ENCODE measurements at regions of chrX and their contacts with region 1.

Region 1: GRCh38 chrX:79270401-79270800 is 96.7 kb downstream of the ITM2A start:
- DNase-seq: peak; percentile 68 to 77 (median 71)
- H3K4me3 ChIP-seq: no peak overlapping the region
- H3K4me3 Mint-ChIP-seq: peak overlapping the region; percentile 3 to 73 (median 22)
- H3K27ac ChIP-seq: peak overlapping the region; percentile 15
- H3K27ac Mint-ChIP-seq: peak overlapping the region; percentile 42 to 91 (median 64)
- H3K4me1 ChIP-seq: peaks cover 61% of the 10 kb centered on the region
- H3K4me1 Mint-ChIP-seq: peaks cover 27 to 49% (median 34%) of the 10 kb centered on the region in 4 donors
- H3K27me3 ChIP-seq: no peaks in the 10 kb centered on the region
- H3K27me3 Mint-ChIP-seq: no peaks in the 10 kb centered on the region

Region 2: DNA sequence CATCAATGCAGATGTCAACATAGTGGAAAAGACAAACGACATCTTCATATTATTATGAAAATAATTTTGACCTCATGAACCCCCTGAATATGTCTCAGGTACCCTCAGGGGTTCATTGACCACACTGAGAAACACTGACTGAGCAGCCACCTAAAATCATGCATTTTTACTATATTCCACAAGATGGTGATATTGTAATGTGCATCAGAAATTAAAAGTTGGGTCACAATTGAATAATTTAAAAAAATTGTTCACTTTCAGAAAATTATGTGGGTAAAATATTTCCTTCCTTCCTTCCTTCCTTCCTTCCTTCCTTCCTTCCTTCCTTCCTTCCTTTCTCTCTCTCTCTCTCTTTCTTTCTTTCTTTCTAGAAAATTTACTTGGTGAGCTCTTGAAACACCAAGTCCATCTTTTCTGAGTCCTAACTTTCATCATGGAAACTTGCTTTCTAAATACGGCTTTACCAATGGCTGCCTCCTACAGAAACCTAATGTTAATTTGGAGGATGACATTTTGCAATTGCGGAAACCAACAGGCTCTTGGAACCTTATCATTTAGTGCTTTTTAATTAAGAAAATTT is 714.9 kb before region 1 on chrX:
- CTCF ChIA-PET with region 1: no interaction called
- POLR2A ChIA-PET with region 1: no interaction called
- intact Hi-C with region 1: loop called (anchors 1 kb)
- DNase-seq: peak in 4 of 5 donors; percentile 31 to 39 (median 33)
- H3K4me3 ChIP-seq: no peak overlapping the region
- H3K4me3 Mint-ChIP-seq: peak overlapping the region in 2 of 8 donors; percentile 24 to 34
- H3K27ac ChIP-seq: no peak overlapping the region
- H3K27ac Mint-ChIP-seq: peak overlapping the region in 5 of 7 donors; percentile 36 to 90 (median 75)
- H3K4me1 ChIP-seq: peaks cover 6% of the 10 kb centered on the region
- H3K4me1 Mint-ChIP-seq: peaks cover 0 to 1% (median 0%) of the 10 kb centered on the region in 4 donors
- H3K27me3 ChIP-seq: no peaks in the 10 kb centered on the region
- H3K27me3 Mint-ChIP-seq: no peaks in the 10 kb centered on the region

Region 3: GRCh38 chrX:79036157-79036880 is 234.1 kb before region 1 on chrX:
- CTCF ChIA-PET with region 1: interaction called, 4 read pairs
- POLR2A ChIA-PET with region 1: no interaction called
- intact Hi-C with region 1: loop called (anchors 1 kb)
- DNase-seq: no peak
- H3K4me3 ChIP-seq: no peak overlapping the region
- H3K4me3 Mint-ChIP-seq: peak overlapping the region in 4 of 8 donors; percentile 13 to 67 (median 36)
- H3K27ac ChIP-seq: no peak overlapping the region
- H3K27ac Mint-ChIP-seq: peak overlapping the region in 2 of 7 donors; percentile 37 to 63
- H3K4me1 ChIP-seq: peaks cover 24% of the 10 kb centered on the region
- H3K4me1 Mint-ChIP-seq: peaks cover 15 to 52% (median 25%) of the 10 kb centered on the region in 4 donors
- H3K27me3 ChIP-seq: no peaks in the 10 kb centered on the region
- H3K27me3 Mint-ChIP-seq: no peaks in the 10 kb centered on the region

Region 4: GRCh38 chrX:79146640-79147390 is 123.6 kb before region 1 on chrX:
- CTCF ChIA-PET with region 1: interaction called, 7 read pairs
- POLR2A ChIA-PET with region 1: interaction called, 49 read pairs
- intact Hi-C with region 1: loop called (anchors 2 kb)
- DNase-seq: peak in 2 of 5 donors; percentile 30 to 36
- H3K4me3 ChIP-seq: peak overlapping the region; percentile 45 to 81
- H3K4me3 Mint-ChIP-seq: peak overlapping the region; percentile 83 to 98 (median 95)
- H3K27ac ChIP-seq: peak overlapping the region; percentile 76
- H3K27ac Mint-ChIP-seq: peak overlapping the region; percentile 86 to 98 (median 93)
- H3K4me1 ChIP-seq: peaks cover 53% of the 10 kb centered on the region
- H3K4me1 Mint-ChIP-seq: peaks cover 11 to 56% (median 23%) of the 10 kb centered on the region in 4 donors
- H3K27me3 ChIP-seq: no peaks in the 10 kb centered on the region
- H3K27me3 Mint-ChIP-seq: no peaks in the 10 kb centered on the region

Region 5: DNA sequence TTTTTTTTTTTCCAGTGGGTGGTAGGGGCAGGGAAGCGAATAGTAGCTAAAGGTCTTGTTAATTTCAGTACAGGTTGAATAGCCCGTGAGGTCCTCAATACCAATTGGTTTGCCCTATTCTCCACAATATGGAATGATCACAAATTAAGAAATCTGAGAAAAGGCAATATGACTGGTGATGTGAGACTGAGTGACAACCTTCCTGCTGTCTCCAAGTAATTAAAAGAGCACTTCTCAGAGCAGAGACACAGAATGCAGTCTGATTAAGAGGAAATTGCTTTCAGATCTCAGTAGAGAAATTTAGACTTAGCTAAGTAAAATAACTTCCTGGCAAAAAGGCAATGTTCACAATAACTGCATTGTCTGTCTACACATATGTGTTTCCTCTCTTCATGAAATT is 102.9 kb before region 1 on chrX:
- CTCF ChIA-PET with region 1: interaction called, 5 read pairs
- POLR2A ChIA-PET with region 1: interaction called, 16 read pairs
- intact Hi-C with region 1: loop called (anchors 5 kb)
- DNase-seq: no peak
- H3K4me3 ChIP-seq: peak overlapping the region in 1 of 2 donors; percentile 23
- H3K4me3 Mint-ChIP-seq: peak overlapping the region; percentile 19 to 81 (median 60)
- H3K27ac ChIP-seq: peak overlapping the region; percentile 66
- H3K27ac Mint-ChIP-seq: peak overlapping the region; percentile 77 to 97 (median 90)
- H3K4me1 ChIP-seq: peaks cover 98% of the 10 kb centered on the region
- H3K4me1 Mint-ChIP-seq: peaks cover 47 to 95% (median 67%) of the 10 kb centered on the region in 4 donors
- H3K27me3 ChIP-seq: no peaks in the 10 kb centered on the region
- H3K27me3 Mint-ChIP-seq: no peaks in the 10 kb centered on the region

Region 6: DNA sequence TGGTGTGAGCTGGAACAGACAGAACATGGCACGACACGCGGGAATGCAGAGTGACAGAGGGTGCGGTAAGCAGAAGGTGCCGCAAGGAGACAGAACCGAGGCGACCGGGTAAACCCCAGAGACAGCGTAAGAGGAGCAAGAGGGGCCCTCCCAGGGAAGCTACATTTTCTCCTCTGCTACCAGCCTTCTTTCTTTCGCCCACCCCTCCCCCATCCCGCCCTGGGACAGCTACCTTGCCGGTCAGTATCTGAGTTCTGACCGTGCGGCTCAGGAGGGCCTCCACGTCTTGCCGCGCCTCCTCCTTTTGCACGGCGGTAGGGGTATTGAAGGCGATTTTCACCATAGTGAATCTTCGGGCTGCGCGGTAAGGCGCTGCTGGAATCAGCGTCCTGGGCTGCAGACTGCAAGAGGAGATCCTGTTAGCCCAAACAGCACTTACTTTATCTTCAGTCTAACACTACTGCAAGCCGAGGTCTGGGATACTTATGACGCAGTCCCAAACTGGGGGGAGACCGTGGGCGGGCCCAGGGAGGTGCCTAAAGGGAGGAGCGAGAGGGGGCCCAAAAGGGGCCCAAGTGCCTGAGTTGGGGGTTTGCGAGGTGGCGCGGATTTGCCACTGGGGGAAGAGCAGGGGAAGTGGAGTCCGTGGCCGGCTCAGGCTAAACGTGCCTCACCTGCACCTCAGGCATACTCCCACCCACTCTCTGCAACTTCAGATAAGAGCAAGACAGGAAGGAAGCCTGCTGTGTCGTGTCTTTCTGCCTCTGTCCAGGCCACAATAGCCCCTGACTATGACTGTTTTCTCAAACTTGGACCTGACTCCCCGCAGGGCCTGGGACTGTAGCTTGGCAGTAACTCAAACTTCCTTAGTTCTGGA is 96.7 kb after region 1 on chrX and contains the start of gene ITM2A:
- CTCF ChIA-PET with region 1: interaction called, 5 read pairs
- POLR2A ChIA-PET with region 1: interaction called, 7 read pairs
- intact Hi-C with region 1: loop called (anchors 5 kb)
- DNase-seq: peak; percentile 64 to 79 (median 71)
- H3K4me3 ChIP-seq: peak within 1 kb of the TSS; percentile 65 to 84
- H3K4me3 Mint-ChIP-seq: peak within 1 kb of the TSS; percentile 91 to 99 (median 94)
- H3K27ac ChIP-seq: peak within 1 kb of the TSS; percentile 95
- H3K27ac Mint-ChIP-seq: peak within 1 kb of the TSS; percentile 97 to 99 (median 97)
- H3K4me1 ChIP-seq: peaks cover 27% of the 10 kb centered on the region
- H3K4me1 Mint-ChIP-seq: peaks cover 17 to 27% (median 22%) of the 10 kb centered on the region in 4 donors
- H3K27me3 ChIP-seq: no peaks in the 10 kb centered on the region
- H3K27me3 Mint-ChIP-seq: no peaks in the 10 kb centered on the region
- total RNA-seq, gene ITM2A: 147 to 169 TPM

Region 7: GRCh38 chrX:80014141-80014940 is 743.9 kb after region 1 on chrX and contains the start of gene TBX22:
- CTCF ChIA-PET with region 1: no interaction called
- POLR2A ChIA-PET with region 1: no interaction called
- intact Hi-C with region 1: no loop called
- DNase-seq: no peak
- H3K4me3 ChIP-seq: no peak within 1 kb of the TSS
- H3K4me3 Mint-ChIP-seq: no peak within 1 kb of the TSS
- H3K27ac ChIP-seq: no peak within 1 kb of the TSS
- H3K27ac Mint-ChIP-seq: no peak within 1 kb of the TSS
- H3K4me1 ChIP-seq: no peaks in the 10 kb centered on the region
- H3K4me1 Mint-ChIP-seq: no peaks in the 10 kb centered on the region
- H3K27me3 ChIP-seq: no peaks in the 10 kb centered on the region
- H3K27me3 Mint-ChIP-seq: no peaks in the 10 kb centered on the region
- total RNA-seq, gene TBX22: not detected